ENCODE measurements at regions of chr4 and their contacts with region 1.

Region 1: GRCh38 chr4:83252782-83253405 is 31.7 kb downstream of the COQ2 start:
- DNase-seq: peak; percentile 54
- ATAC-seq: peak; percentile 53
- H3K4me3 ChIP-seq: no peak overlapping the region
- H3K27ac ChIP-seq: no peak overlapping the region
- H3K4me1 ChIP-seq: peaks cover 41 to 78% of the 10 kb centered on the region in 2 experiments
- H3K27me3 ChIP-seq: no peaks in the 10 kb centered on the region
- CTCF ChIP-seq: peak; percentile 70 to 87 (median 83); a peak in 5 of 6 replicates
- POLR2A ChIP-seq: no peak
- RAD21 ChIP-seq: peak; percentile 78

Region 2: GRCh38 chr4:82865592-82865991 is 387.3 kb before region 1 on chr4:
- CTCF ChIA-PET with region 1: no interaction called
- POLR2A ChIA-PET with region 1: no interaction called
- RAD21 ChIA-PET with region 1: no interaction called
- intact Hi-C with region 1: no loop called
- DNase-seq: no peak
- ATAC-seq: no peak
- H3K4me3 ChIP-seq: no peak overlapping the region
- H3K27ac ChIP-seq: no peak overlapping the region; the same call in 1 of the 2 replicates
- H3K4me1 ChIP-seq: peaks cover 5 to 16% of the 10 kb centered on the region in 2 experiments
- H3K27me3 ChIP-seq: no peaks in the 10 kb centered on the region
- CTCF ChIP-seq: no peak
- POLR2A ChIP-seq: no peak
- RAD21 ChIP-seq: no peak

Region 3: GRCh38 chr4:82900331-82901128 is 352.4 kb before region 1 on chr4 and contains the start of gene THAP9:
- CTCF ChIA-PET with region 1: no interaction called
- POLR2A ChIA-PET with region 1: no interaction called
- RAD21 ChIA-PET with region 1: no interaction called
- intact Hi-C with region 1: loop called (anchors 5 kb)
- DNase-seq: peak; percentile 99
- ATAC-seq: peak; percentile 95
- H3K4me3 ChIP-seq: peak within 1 kb of the TSS; percentile 93 to 95
- H3K27ac ChIP-seq: peak within 1 kb of the TSS; percentile 87
- H3K4me1 ChIP-seq: peaks cover 6 to 20% of the 10 kb centered on the region in 2 experiments; a peak in 3 of 4 replicates
- H3K27me3 ChIP-seq: no peaks in the 10 kb centered on the region
- CTCF ChIP-seq: no peak
- POLR2A ChIP-seq: peak; percentile 92
- RAD21 ChIP-seq: no peak
- total RNA-seq, gene THAP9: 6.4 TPM

Region 4: DNA sequence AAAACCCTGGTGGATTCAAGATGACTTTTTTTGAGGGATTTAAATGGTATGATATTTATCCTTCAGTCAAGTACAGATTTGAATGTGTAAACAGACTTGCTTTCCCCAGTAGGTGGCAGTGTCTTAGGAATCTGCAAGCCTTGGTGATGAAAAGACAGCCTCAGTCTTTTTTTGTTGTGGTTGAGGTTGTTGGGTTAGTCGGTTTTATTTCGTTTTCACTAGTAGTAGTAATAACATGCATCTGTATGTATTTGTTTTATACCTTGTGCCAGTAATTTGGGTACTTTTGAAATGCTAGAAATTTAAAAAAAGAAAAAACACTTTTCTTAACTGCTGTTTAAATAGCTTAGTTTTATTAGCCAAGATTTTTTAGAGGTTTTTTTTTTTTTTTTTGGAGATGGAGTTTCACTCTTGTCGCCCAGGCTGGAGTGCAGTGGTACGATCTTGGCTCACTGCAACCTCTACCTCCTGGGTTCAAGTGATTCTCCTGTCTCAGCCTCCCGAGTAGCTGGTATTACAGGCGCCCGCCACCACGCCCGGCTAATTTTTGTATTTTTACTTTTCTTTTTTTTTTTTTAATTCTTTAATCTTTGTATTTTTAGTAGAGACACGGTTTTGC is 178.7 kb before region 1 on chr4:
- CTCF ChIA-PET with region 1: interaction called, 9 read pairs
- POLR2A ChIA-PET with region 1: interaction called, 3 read pairs
- RAD21 ChIA-PET with region 1: no interaction called
- intact Hi-C with region 1: loop called (anchors 1 kb)
- DNase-seq: peak; percentile 65
- ATAC-seq: peak; percentile 86
- H3K4me3 ChIP-seq: no peak overlapping the region
- H3K27ac ChIP-seq: no peak overlapping the region
- H3K4me1 ChIP-seq: peaks cover 0 to 15% of the 10 kb centered on the region in 2 experiments; a peak in 2 of 4 replicates
- H3K27me3 ChIP-seq: no peaks in the 10 kb centered on the region
- CTCF ChIP-seq: peak; percentile 71 to 81 (median 73); a peak in 5 of 6 replicates
- POLR2A ChIP-seq: no peak
- RAD21 ChIP-seq: peak; percentile 69

Region 5: DNA sequence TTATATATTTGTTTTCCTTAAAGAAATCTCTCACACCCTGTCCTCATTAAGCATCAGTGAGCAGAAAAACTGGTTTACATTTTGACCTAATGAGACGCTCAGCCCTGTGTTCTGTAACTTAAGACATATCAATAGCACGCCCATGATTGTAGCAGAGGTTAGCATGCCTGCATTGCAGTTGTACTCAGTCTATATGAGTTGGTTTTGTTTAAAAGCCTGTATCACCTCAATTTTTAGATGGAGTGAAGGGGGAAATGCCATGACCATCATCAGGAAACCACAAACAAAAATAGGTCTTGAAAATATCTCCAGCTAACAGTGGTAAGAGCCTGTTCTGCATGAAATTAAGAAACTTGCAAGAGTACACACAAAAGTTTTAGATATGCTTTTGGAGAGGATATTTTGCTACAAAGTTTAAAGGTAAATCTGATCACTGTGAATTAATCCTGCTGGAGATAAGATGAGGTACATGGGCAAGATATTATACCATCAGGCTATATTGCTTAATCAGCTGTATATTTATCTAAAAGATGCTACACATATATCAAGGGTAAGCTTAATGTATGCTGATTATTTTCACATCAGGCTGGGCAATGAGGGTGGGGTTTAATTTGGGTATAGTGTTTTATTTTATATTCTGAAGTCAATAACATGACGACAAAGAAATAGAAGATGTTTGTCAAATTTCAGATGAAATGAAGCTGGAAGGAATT is 44.8 kb after region 1 on chr4:
- CTCF ChIA-PET with region 1: no interaction called
- POLR2A ChIA-PET with region 1: no interaction called
- RAD21 ChIA-PET with region 1: no interaction called
- intact Hi-C with region 1: no loop called
- DNase-seq: no peak
- ATAC-seq: no peak
- H3K4me3 ChIP-seq: no peak overlapping the region
- H3K27ac ChIP-seq: no peak overlapping the region
- H3K4me1 ChIP-seq: no peaks in the 10 kb centered on the region
- H3K27me3 ChIP-seq: no peaks in the 10 kb centered on the region
- CTCF ChIP-seq: no peak
- POLR2A ChIP-seq: no peak
- RAD21 ChIP-seq: no peak

Region 6: DNA sequence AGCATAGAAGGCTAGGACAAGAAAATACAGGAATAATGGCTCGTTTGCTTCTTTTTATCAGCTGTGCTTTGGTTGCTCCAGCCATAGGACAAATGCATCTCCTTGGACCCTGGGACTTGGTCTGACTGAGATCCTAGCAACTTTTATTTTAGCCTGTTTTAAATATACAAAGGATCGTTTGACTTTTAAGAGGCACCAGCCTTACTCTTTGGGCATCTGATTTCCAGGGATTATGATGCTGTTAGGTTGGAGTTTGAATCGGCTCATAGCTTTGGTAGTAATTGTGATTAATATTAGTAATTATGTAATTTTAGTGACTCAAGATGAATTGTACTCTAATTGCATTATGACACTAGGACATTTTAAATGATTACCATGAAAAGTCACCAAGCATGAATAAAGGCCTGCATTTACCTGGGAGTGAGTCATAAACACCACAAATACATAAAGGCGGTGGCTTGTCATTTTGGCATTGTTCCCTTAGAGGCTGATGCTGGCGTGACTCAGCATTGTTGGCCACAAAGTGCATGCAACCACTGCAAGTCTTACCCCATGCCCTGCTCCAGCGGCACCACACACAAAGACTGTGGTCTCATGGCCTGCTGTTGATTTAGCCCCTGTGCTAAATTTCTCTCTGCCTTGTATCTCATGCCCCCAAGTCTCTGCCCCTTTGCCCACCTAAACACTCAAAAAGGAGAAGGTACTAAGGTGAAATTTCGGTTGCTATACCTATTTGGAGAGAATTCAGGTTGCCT is 295.4 kb after region 1 on chr4:
- CTCF ChIA-PET with region 1: no interaction called
- POLR2A ChIA-PET with region 1: no interaction called
- RAD21 ChIA-PET with region 1: no interaction called
- intact Hi-C with region 1: no loop called
- DNase-seq: peak; percentile 99
- ATAC-seq: peak; percentile 85
- H3K4me3 ChIP-seq: peak overlapping the region in 1 of 2 experiments; percentile 38; a peak in 2 of 4 replicates
- H3K27ac ChIP-seq: peak overlapping the region; percentile 73
- H3K4me1 ChIP-seq: peaks cover 40 to 64% of the 10 kb centered on the region in 2 experiments
- H3K27me3 ChIP-seq: no peaks in the 10 kb centered on the region
- CTCF ChIP-seq: no peak
- POLR2A ChIP-seq: no peak
- RAD21 ChIP-seq: no peak; the same call in 1 of the 2 replicates

Measured in HCT116 (cell line).